Gastrocnemius medialis (tissue), 4 donors: ENCODE measurements at regions of chr5 and their contacts with region 1.

Region 1: DNA sequence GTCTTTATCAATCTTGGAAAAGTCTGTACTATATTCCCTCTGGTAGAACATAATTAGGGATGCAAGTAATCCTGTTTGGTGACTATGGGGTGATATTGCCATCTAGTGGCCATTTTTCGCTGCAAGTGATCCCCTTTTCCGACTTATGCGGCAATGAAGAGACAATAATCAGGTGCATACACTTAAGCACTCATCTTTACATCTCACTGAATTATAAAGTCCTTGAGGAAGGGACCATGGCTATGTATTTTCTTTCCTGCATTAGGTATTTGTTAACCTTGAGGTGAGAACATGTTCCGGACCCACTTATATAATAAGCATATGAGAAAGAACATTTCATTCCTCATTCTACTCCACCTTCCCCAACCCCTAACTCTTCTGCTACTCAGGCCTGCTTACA is 19.6 kb upstream of the LIX1 start:
- DNase-seq: peak; percentile 10 to 36
- ATAC-seq: peak; percentile 66 to 86
- H3K4me3 ChIP-seq: no peak overlapping the region
- H3K27ac ChIP-seq: no peak overlapping the region
- H3K4me1 ChIP-seq: no peaks in the 10 kb centered on the region
- H3K27me3 ChIP-seq: no peaks in the 10 kb centered on the region
- CTCF ChIP-seq: peak; percentile 75 to 89 (median 81)
- POLR2A ChIP-seq: no peak

Region 2: DNA sequence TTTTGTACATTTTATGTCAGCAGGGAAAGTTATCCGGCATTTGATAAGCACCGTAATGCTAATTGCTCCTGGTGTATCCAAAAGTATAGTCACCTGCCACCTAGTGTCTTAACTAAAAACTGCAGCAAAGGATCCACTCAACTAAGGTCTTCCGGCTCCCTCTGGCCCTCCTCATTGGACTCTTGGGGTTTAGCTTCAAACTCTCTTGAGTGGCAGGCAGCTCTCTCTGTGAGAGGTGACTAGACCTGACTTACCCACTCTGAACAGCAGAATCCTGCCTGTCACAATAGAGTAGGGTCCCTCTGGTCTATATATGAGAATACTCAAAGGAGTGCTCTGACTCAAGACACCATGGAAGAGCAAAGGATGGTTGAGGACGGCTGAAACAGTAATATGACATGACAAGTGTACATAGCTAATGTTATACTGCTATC is 560.2 kb before region 1 on chr5:
- in situ Hi-C with region 1: loop called in 2 of 4 experiments (anchors 25 kb)
- intact Hi-C with region 1: no loop called
- DNase-seq: peak in 1 of 2 donors; percentile 22
- ATAC-seq: peak; percentile 87 to 90
- H3K4me3 ChIP-seq: no peak overlapping the region
- H3K27ac ChIP-seq: no peak overlapping the region
- H3K4me1 ChIP-seq: no peaks in the 10 kb centered on the region
- H3K27me3 ChIP-seq: no peaks in the 10 kb centered on the region
- CTCF ChIP-seq: peak; percentile 63 to 86 (median 75)
- POLR2A ChIP-seq: no peak

Region 3: DNA sequence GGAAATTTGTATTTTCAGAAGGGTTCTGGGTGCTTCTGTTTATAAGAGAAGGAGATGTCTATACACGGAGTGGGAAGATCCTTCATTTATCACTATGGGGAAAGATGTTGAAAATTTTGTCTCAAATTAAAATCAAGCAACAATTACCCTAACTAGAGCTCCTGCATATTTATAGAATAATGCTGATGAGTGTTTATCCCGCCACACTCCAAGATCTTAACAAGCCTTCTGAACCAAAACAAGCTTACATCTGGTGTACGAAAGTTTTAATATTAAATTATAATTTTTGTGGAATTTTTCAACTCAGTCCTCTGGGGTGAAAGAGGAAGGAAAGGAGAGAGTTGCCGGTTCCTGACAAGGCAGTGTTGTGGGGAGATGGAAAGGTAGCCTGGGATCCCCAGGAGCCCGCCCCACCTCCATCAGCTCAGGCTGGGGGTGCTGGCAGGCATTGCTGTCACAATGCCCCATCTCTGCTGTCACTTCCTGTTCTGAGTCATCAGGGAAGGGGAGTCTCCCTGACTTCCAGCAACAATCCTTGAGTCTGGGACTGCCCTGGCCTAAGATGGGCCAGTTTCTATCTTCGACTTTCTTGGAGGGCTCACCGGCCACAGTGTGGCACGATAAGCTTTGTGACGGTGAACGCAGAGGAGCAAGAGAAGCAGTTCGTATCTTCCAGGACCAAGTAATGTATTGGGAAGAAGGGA is 418.8 kb before region 1 on chr5:
- in situ Hi-C with region 1: loop called in 1 of 4 experiments (anchors 10 kb)
- intact Hi-C with region 1: no loop called
- DNase-seq: no peak
- ATAC-seq: peak; percentile 20 to 40
- H3K4me3 ChIP-seq: no peak overlapping the region
- H3K27ac ChIP-seq: peak overlapping the region; percentile 71 to 79 (median 77)
- H3K4me1 ChIP-seq: peaks cover 11 to 14% of the 10 kb centered on the region in 2 donors
- H3K27me3 ChIP-seq: no peaks in the 10 kb centered on the region
- CTCF ChIP-seq: no peak
- POLR2A ChIP-seq: peak in 1 of 2 donors; percentile 10

Region 4: GRCh38 chr5:96868603-96869371 is 293.3 kb before region 1 on chr5:
- in situ Hi-C with region 1: loop called (anchors 5 to 10 kb)
- intact Hi-C with region 1: loop called (anchors 1 kb)
- DNase-seq: no peak
- ATAC-seq: peak; percentile 96 to 99
- H3K4me3 ChIP-seq: no peak overlapping the region
- H3K27ac ChIP-seq: no peak overlapping the region
- H3K4me1 ChIP-seq: peaks cover 0 to 6% of the 10 kb centered on the region in 2 donors
- H3K27me3 ChIP-seq: no peaks in the 10 kb centered on the region
- CTCF ChIP-seq: peak; percentile 77 to 98 (median 90)
- POLR2A ChIP-seq: no peak

Region 5: DNA sequence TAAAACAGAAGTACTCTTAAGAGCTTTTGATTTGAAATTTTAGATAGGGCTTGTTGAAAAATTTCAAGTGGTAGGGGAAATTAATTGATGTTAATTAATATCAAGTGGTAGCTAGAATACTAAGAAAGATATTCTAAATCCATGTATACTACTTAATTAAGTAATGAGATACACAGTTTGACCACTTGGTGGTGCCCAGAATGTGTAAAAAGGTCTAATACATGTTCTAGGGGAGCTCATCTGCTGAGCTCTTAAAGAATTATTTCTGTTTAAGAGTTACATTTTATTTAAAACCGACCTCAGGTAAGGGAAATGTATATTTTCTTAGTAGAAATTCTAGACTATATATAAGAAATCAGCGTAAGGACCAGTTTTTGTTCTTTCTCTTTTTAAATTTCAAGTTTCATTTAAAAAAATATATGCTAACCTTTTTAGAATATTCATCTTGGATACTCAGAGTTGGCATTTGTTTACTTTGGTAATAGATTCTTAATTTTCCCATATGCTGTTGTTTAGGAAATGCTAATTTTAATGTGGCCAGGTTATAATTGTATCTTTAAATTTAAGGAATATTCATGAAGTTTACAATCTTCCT is 164.7 kb before region 1 on chr5:
- in situ Hi-C with region 1: loop called in 2 of 4 experiments (anchors 10 to 25 kb)
- intact Hi-C with region 1: loop called (anchors 5 kb)
- DNase-seq: no peak
- ATAC-seq: no peak
- H3K4me3 ChIP-seq: no peak overlapping the region
- H3K27ac ChIP-seq: no peak overlapping the region
- H3K4me1 ChIP-seq: no peaks in the 10 kb centered on the region
- H3K27me3 ChIP-seq: no peaks in the 10 kb centered on the region
- CTCF ChIP-seq: peak in 3 of 5 experiments; percentile 28 to 40 (median 33)
- POLR2A ChIP-seq: no peak

Region 6: GRCh38 chr5:97231025-97231636 is 69.1 kb after region 1 on chr5:
- in situ Hi-C with region 1: no loop called
- intact Hi-C with region 1: no loop called
- DNase-seq: peak in 1 of 2 donors; percentile 20
- ATAC-seq: peak; percentile 78 to 87
- H3K4me3 ChIP-seq: no peak overlapping the region
- H3K27ac ChIP-seq: no peak overlapping the region
- H3K4me1 ChIP-seq: no peaks in the 10 kb centered on the region
- H3K27me3 ChIP-seq: no peaks in the 10 kb centered on the region
- CTCF ChIP-seq: peak; percentile 40 to 73 (median 64)
- POLR2A ChIP-seq: no peak